ENCODE measurements at regions of chr13 and their contacts with region 1.

Region 1: DNA sequence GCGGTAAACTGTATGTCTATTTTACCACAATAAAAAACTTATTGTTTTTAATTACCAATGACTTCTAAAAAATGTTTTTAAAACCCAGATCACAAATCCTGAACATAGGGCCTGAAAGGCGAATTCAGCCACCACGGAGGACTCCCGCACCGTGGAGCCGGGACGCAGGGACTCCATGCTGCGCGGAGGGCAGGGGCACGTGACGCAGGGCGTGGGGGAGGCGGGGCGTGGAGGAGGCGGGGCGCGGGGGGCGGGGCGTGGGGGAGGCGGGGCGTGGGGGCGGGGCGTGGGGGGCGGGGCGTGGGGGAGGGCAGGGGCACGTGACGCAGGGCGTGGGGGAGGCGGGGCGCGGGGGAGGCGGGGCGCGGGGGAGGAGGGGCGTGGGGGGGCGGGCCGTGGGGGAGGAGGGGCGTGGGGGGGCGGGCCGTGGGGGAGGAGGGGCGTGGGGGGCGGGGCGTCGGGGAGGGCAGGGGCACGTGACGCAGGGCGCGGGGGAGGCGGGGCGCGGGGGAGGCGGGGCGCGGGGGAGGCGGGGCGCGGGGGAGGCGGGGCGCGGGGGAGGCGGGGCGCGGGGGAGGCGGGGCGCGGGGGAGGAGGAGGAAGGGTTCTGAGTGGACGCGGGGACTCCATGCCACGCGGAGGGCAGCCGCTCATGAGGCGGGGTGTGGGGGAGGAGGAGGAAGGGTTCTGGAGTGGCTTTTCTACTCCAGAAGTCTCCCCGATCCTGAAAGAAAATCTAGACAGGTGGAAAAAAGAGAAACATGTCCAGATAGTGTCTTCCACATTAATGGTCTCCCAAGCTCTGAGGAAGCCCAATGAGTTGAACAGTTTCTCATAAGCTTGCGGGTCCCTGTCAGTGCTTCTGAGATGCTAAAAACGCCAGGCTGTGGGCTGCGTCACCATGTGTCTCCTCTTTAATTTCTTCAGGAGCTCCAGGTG is 4.4 kb upstream of the PROZ start:
- DNase-seq: peak; percentile 86
- ATAC-seq: peak; percentile 84 to 87

Region 2: GRCh38 chr13:112722433-112723250 is 431.4 kb before region 1 on chr13:
- intact Hi-C with region 1: no loop called
- DNase-seq: peak; percentile 81
- ATAC-seq: peak; percentile 81 to 90

Region 3: GRCh38 chr13:113203507-113204377 is 49.7 kb after region 1 on chr13:
- intact Hi-C with region 1: loop called in 1 of 2 experiments (anchors 5 kb)
- DNase-seq: peak; percentile 49
- ATAC-seq: peak; percentile 63 to 64

Measured in left cardiac atrium (tissue), 4 donors.